ENCODE measurements at regions of chr10 and their contacts with region 1.

Region 1: DNA sequence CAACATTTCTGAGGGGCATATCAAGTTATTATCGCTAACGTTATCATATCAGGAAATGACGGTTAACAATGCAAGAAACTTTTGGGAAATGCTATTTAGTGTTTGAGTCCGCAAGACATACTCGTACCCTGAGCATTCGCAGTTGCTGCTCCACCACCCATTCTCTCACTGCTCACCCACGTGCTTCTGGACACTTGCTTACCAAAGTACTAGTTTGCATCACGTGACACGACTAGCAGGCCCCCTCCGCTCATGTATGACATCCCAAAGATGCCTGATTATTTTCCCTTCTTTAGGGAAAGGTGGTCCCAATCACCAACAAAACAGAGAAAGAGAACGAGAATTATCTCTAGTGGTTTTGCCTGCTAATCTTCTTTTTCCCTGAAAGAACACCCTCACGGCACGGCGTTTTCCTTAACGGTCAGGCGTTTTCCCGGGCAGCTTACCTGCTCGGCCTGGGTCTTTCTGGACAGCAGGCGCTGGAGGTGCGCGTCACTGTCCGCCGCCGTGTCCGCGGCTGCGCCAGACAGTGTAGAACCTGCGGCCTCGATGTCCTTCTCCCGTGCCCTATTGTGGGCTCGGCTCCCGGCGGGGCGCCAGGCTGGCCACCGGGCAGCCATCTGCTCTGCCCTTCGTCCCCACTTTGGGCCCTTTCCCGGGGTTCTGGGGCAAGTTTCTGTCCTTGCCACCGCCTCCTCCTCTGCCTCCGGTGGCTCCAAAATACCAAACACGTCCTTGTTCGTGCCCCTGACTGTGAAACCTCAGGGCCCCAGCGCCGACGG is at the start of gene SUPV3L1:
- DNase-seq: peak; percentile 96
- H3K4me3 ChIP-seq: peak within 1 kb of the TSS; percentile 75 to 99 (median 97)
- H3K27ac ChIP-seq: peak within 1 kb of the TSS; percentile 87 to 94 (median 92)
- H3K4me1 ChIP-seq: peaks cover 0 to 29% (median 26%) of the 10 kb centered on the region in 4 donors
- H3K27me3 ChIP-seq: no peaks in the 10 kb centered on the region
- CTCF ChIP-seq: no peak
- EP300 ChIP-seq: no peak
- POLR2A ChIP-seq: peak; percentile 75 to 77
- total RNA-seq, gene SUPV3L1: 20.8 to 36.2 (median 26.2) TPM

Region 2: DNA sequence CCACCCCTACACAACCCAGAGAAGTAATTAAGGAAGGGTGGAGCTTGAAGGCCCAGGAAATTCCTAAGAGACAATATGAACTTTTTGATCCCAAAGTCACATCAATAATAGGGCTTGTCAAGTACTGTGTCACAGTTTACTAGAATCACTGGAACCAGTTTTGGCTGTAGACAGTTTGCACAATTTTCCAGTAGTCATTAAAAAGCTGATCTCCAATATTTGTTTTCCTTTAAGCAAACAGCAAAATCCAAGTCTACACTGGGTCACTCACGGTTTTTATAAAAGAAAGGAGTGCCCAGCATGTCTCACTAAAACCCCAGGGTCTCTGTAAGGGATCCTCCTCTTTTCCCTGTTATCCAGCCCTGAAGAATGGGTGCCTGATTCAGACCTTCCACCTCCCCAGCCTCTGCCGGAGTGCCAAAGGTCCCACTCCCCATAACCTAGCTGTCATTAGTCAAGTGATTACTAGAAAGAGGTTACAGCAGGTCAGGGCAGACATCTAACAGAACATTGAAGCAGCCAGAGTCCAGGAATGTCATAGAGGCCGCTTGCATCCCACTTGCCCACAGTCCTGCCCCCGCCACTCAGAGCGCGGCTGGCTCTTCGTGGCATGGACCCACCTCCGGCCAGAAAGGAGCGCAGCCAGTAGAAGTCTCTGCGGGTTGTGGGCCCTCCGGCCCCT is 653.2 kb before region 1 on chr10:
- intact Hi-C with region 1: loop called (anchors 2 kb)
- DNase-seq: no peak
- H3K4me3 ChIP-seq: peak overlapping the region; percentile 80 to 92 (median 88)
- H3K27ac ChIP-seq: peak overlapping the region; percentile 93 to 96 (median 94)
- H3K4me1 ChIP-seq: peaks cover 0 to 13% (median 8%) of the 10 kb centered on the region in 4 donors
- H3K27me3 ChIP-seq: no peaks in the 10 kb centered on the region
- CTCF ChIP-seq: no peak
- EP300 ChIP-seq: no peak
- POLR2A ChIP-seq: no peak

Region 3: DNA sequence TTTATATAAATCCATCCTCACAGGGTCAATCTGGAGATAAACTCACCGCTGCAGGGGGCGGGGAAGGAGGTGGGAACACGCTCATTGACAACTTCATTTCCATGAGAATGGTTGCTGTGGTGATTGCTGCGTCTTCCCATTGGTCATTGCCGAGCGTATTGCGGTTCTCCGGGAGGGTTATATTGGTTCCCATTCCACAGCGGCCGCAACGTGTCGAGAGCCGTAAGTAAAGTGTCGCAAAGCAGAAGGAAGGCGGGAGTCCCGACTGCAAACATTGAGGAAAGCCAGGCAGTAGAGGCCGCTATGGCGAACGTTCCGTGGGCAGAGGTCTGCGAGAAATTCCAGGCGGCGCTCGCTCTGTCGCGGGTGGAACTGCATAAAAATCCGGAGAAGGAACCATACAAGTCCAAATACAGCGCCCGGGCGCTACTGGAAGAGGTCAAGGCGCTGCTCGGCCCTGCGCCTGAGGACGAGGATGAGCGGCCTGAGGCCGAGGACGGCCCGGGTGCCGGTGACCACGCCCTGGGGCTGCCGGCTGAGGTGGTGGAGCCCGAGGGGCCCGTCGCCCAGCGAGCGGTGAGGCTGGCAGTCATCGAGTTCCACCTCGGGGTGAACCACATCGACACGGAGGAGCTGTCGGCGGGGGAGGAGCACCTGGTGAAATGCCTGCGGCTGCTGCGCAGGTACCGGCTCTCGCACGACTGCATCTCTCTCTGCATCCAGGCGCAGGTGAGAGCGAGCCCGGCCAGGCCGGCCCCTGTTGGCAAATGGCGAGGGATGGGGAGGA is 191.2 kb before region 1 on chr10 and contains the start of gene KIFBP:
- intact Hi-C with region 1: loop called (anchors 10 kb)
- DNase-seq: peak; percentile 97
- H3K4me3 ChIP-seq: peak within 1 kb of the TSS; percentile 80 to 97 (median 92)
- H3K27ac ChIP-seq: peak within 1 kb of the TSS; percentile 88 to 90 (median 88)
- H3K4me1 ChIP-seq: peaks cover 0 to 49% (median 46%) of the 10 kb centered on the region in 4 donors
- H3K27me3 ChIP-seq: no peaks in the 10 kb centered on the region
- CTCF ChIP-seq: no peak
- EP300 ChIP-seq: no peak
- POLR2A ChIP-seq: peak; percentile 79 to 91
- total RNA-seq, gene KIFBP: 21.0 to 34.6 (median 23.8) TPM

Region 4: GRCh38 chr10:69051303-69051702 is 128.6 kb before region 1 on chr10:
- intact Hi-C with region 1: no loop called
- DNase-seq: peak; percentile 76
- H3K4me3 ChIP-seq: no peak overlapping the region
- H3K27ac ChIP-seq: peak overlapping the region in 2 of 4 donors; percentile 34 to 57
- H3K4me1 ChIP-seq: no peaks in the 10 kb centered on the region
- H3K27me3 ChIP-seq: no peaks in the 10 kb centered on the region
- CTCF ChIP-seq: no peak
- EP300 ChIP-seq: no peak
- POLR2A ChIP-seq: no peak

Region 5: DNA sequence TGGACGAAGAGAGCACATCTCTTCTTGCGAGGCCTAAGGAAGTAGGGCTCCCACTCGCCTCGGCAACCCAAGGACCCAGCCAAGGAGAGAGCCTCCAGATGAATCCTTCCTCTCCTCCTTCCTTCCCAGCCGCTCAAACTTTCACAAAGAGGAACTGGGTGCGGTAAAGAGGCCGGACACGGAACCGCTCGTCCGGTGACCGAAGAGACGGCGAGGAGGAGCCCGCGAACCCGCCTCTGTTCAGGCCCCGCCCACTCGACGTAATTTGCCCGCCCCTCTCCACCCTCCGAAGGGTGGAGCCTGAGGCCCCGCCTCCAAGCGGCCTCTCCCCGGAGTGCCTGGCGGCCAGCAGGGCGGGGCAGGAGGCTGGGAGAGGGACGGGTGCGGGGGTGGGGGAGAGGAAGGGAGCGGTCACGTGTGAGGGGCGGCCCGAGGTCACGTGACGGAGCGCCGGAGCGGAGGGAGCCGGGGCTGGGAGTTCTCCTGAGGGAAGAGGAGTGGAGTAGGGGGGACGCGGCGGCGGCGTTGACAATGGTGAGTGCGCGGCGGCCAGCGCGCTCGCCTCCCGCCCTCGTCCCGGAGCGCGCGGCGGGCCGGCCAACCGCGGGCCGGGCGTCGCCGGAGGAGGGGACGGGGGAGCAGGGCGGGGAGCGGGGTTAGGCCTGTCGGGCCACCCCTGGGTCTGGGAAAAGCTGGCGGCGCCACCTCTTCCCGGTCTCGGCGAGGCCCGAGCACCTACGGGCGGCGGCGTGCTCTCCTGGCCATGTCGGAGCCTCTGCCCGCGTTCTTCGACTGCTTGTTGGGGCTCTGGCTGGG is 56.0 kb before region 1 on chr10 and contains the start of gene VPS26A:
- intact Hi-C with region 1: loop called (anchors 2 kb)
- DNase-seq: peak; percentile 100
- H3K4me3 ChIP-seq: peak within 1 kb of the TSS; percentile 90 to 95 (median 94)
- H3K27ac ChIP-seq: peak within 1 kb of the TSS; percentile 95 to 99 (median 98)
- H3K4me1 ChIP-seq: peaks cover 0 to 23% (median 17%) of the 10 kb centered on the region in 4 donors
- H3K27me3 ChIP-seq: no peaks in the 10 kb centered on the region
- CTCF ChIP-seq: peak in 3 of 4 experiments; percentile 5 to 8 (median 6)
- EP300 ChIP-seq: peak in 1 of 4 donors; percentile 23
- POLR2A ChIP-seq: peak; percentile 97
- total RNA-seq, gene VPS26A: 35.7 to 59.2 (median 44.7) TPM

Region 6: GRCh38 chr10:69290993-69291392 is 111.1 kb after region 1 on chr10:
- intact Hi-C with region 1: no loop called
- DNase-seq: no peak
- H3K4me3 ChIP-seq: no peak overlapping the region
- H3K27ac ChIP-seq: no peak overlapping the region
- H3K4me1 ChIP-seq: no peaks in the 10 kb centered on the region
- H3K27me3 ChIP-seq: peaks cover 0 to 3% (median 0%) of the 10 kb centered on the region in 3 donors
- CTCF ChIP-seq: no peak
- EP300 ChIP-seq: no peak
- POLR2A ChIP-seq: no peak